GM10248 (cell line): ENCODE measurements at regions of chr4 and their contacts with region 1.

Region 1: DNA sequence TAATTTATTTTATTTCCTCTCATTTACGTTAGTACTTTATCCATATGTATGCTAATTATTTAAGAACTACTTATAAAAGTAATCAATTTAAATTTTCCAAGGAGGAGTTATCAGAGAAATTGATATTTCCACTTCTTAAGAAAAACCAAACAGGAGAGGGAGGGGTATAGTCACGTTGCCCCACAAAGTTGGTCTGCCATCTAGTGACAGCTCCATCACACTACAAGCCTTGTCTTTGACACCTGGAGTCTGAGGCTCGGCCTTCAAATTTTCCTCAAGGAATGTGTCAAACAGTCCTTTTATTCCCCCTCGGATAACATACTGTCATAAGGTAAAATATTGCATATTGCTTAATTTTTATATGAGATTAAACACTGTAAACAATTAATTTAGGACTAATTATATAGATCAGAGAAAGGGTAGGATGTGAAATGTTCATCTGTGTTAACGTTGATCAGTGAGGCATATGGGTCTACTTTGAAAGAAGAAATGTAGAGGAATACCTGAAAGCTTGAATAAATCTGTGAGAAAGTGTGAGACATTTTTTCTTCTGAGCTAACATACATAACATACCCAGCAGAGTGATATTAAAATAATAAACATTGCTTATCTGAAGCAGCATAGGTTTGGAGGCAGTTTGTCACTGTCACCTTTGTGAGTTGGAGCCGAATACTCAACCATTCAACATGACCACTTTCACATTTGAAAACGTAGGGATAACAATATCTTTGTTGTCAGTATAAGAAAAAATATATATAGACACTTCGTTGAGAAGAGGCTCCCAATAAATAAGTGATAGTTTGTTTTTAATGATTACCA is 114.4 kb downstream of the GLRA3 start:
- DNase-seq: peak; percentile 35
- CTCF ChIP-seq: peak; percentile 68

Region 2: GRCh38 chr4:174358829-174359228 is 355.8 kb before region 1 on chr4:
- CTCF ChIA-PET with region 1: interaction called, 11 read pairs
- POLR2A ChIA-PET with region 1: no interaction called
- DNase-seq: peak; percentile 48
- CTCF ChIP-seq: no peak

Region 3: DNA sequence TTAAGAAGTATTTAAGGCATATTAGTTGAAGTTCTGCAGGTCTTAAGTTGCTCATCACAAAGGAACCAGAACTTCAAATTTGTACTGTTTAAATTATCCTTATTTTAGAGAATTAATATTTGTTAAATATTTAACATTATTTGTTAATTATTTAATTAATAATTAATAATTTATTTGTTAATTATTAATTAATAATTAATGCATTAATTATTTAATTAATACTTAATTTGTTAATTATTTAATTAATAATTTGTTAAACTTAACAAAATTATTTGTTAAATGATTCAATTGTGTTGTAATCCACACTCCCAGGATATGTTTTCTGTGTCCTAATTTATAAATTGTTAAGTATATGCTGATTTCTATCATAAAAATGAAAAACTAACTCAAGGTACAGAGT is 14.9 kb before region 1 on chr4:
- CTCF ChIA-PET with region 1: interaction called, 20 read pairs
- POLR2A ChIA-PET with region 1: no interaction called
- DNase-seq: no peak
- CTCF ChIP-seq: no peak